ENCODE measurements at regions of chr3 and their contacts with region 1.

Region 1: GRCh38 chr3:107235928-107236315 is 141.3 kb upstream of the CCDC54 start:
- DNase-seq: peak; percentile 61
- CTCF ChIP-seq: peak; percentile 84

Region 2: DNA sequence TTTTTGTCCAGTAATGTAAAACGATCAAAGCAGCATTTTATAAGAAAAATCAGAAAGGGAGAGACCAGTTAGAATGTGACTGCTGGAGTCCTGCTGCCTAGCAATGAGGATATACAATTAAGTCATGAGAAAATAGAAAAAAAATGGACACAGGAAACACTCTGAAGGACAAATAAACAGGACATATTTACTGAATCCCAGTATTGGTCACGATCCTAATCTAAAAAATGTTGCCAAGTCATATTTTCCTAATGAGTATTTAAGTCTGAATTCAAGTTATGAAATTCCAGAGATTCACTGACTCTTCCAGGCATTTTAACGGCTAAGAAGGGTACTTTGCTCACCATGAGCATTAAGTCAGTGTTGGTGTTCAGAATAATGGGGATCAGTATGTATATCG is 13.0 kb before region 1 on chr3:
- CTCF ChIA-PET with region 1: interaction called, 28 read pairs
- POLR2A ChIA-PET with region 1: no interaction called
- DNase-seq: no peak
- CTCF ChIP-seq: no peak

Region 3: DNA sequence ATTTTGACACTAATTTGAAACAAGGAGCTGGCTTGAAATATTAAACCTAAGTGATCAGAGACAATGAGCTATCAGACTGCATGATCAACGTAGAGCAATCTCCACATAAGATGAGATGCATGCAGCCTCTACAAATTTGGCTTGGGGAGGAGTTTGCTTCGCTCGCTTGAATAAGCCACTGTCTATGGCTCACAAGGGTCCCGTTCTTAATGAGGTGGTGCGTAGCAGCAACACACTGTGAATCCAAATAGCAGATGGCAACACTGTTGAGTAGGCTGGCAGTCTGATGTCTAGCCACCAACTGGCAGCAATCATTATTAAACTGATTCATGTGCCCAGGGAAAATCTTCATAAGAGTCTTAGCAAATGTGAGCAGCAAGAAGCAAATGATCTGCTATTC is 15.9 kb after region 1 on chr3:
- CTCF ChIA-PET with region 1: interaction called, 13 read pairs
- POLR2A ChIA-PET with region 1: no interaction called
- DNase-seq: no peak
- CTCF ChIP-seq: no peak

Region 4: DNA sequence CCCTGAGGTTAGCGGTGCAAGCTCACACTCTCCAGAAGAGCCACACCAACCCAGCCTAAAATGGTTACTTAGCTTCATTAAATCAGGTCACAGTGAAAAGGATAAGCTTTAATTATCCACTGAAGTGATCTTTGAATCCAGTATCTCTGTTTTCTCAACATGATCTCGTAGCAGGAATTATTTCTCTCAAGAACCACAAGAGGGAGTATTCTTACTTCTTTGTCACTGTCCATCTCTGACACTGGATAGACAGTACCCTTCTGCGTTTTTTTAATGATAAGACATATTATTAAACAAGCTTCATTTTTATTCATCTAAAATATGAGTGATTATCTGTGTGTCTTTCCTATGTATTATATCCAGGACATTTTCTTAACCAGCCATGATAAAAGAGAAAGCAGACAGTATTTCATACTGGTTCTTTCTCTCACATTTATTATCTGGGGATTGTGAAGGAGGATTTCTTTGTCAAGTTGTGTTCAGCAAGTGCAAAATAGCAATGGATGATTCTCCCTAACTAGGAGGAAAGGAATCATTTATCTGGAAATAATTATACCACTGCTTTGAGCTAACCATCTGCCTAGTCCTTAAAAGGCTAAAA is 36.0 kb after region 1 on chr3:
- CTCF ChIA-PET with region 1: interaction called, 17 read pairs
- POLR2A ChIA-PET with region 1: no interaction called
- DNase-seq: peak; percentile 28
- CTCF ChIP-seq: peak; percentile 62

Region 5: GRCh38 chr3:107421170-107421792 is 185.4 kb after region 1 on chr3:
- CTCF ChIA-PET with region 1: interaction called, 29 read pairs
- POLR2A ChIA-PET with region 1: no interaction called
- DNase-seq: peak; percentile 33
- CTCF ChIP-seq: peak; percentile 69

Region 6: GRCh38 chr3:107429320-107430181 is 193.6 kb after region 1 on chr3:
- CTCF ChIA-PET with region 1: interaction called, 26 read pairs
- POLR2A ChIA-PET with region 1: no interaction called
- DNase-seq: peak; percentile 80
- CTCF ChIP-seq: peak; percentile 80